ENCODE measurements at regions of chr15 and their contacts with region 1.

Region 1: DNA sequence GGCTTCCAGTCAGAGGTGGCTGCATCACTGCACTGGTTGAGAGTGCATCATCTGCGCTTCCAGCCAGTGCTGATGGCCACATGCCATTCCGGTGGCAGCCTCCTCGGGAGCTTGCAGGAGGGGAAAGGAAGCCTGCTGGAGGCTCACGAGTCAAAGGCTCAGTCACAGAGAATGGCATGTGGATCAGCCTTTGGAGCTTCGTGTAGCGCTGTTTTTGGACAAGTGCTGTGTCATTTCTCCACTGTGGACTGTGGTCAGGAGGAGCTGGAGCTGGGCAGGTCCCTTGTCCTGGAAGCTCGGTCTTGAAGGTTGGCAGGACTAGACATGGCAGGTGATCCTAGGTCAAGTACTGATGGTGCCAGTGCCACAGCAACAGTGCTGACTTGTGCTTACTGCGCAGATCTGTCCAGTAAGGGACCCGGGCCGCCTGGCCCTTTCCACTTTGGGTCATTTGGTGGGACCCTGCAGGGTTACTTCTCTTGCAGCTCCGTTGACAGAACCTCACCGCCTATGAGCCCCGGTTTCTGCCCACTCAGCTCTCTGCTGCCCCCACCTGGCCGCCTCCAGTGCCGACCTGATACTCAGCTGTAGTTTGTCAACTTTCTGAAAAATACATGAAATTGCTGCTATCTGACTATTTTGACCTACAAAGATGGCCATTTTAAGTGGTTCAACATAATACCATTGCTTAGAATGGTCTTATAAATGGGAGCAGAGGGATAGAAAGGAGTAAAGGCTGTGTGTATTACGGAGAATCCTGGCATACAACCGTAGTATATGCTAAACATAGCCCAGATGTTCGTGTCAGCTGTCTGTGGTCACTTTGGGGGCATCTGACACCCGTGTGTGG is 27.6 kb upstream of the TRPM1 start:
- DNase-seq: peak; percentile 86
- H3K4me3 Mint-ChIP-seq: no peak overlapping the region
- H3K27ac Mint-ChIP-seq: no peak overlapping the region
- H3K4me1 Mint-ChIP-seq: peaks cover 3% of the 10 kb centered on the region
- H3K27me3 Mint-ChIP-seq: peaks cover 54% of the 10 kb centered on the region

Region 2: DNA sequence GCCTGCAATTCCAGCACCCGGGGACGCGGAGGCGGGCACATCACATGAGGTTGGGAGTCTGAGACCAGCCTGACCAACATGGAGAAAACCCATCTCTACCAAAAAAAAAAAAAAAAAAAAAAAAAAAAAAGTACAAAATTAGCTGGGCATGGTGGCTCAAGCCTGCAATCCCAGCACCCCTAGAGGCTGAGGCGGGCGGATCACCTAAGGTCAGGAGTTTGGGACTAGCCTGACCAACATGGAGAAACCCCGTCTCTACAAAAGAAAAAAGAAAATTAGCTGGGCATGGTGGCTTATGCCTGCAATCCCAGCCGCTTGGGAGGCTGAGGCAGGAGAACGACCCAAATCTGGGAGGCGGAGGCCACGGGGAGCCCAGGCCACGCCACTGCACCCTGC is 232.9 kb before region 1 on chr15:
- CTCF ChIA-PET with region 1: interaction called, 31 read pairs
- DNase-seq: no peak
- H3K4me3 Mint-ChIP-seq: no peak overlapping the region
- H3K27ac Mint-ChIP-seq: no peak overlapping the region
- H3K4me1 Mint-ChIP-seq: peaks cover 4% of the 10 kb centered on the region
- H3K27me3 Mint-ChIP-seq: peaks cover 20% of the 10 kb centered on the region

Region 3: GRCh38 chr15:30969696-30970095 is 159.4 kb before region 1 on chr15:
- CTCF ChIA-PET with region 1: interaction called, 13 read pairs
- DNase-seq: no peak
- H3K4me3 Mint-ChIP-seq: no peak overlapping the region
- H3K27ac Mint-ChIP-seq: no peak overlapping the region
- H3K4me1 Mint-ChIP-seq: peaks cover 22% of the 10 kb centered on the region
- H3K27me3 Mint-ChIP-seq: no peaks in the 10 kb centered on the region

Region 4: GRCh38 chr15:31034159-31034558 is 95.0 kb before region 1 on chr15:
- CTCF ChIA-PET with region 1: no interaction called
- DNase-seq: no peak
- H3K4me3 Mint-ChIP-seq: no peak overlapping the region
- H3K27ac Mint-ChIP-seq: no peak overlapping the region
- H3K4me1 Mint-ChIP-seq: peaks cover 5% of the 10 kb centered on the region
- H3K27me3 Mint-ChIP-seq: peaks cover 21% of the 10 kb centered on the region

Region 5: GRCh38 chr15:31111091-31111647 is 18.0 kb before region 1 on chr15:
- CTCF ChIA-PET with region 1: interaction called, 13 read pairs
- DNase-seq: no peak
- H3K4me3 Mint-ChIP-seq: no peak overlapping the region
- H3K27ac Mint-ChIP-seq: no peak overlapping the region
- H3K4me1 Mint-ChIP-seq: no peaks in the 10 kb centered on the region
- H3K27me3 Mint-ChIP-seq: peaks cover 48% of the 10 kb centered on the region

Region 6: DNA sequence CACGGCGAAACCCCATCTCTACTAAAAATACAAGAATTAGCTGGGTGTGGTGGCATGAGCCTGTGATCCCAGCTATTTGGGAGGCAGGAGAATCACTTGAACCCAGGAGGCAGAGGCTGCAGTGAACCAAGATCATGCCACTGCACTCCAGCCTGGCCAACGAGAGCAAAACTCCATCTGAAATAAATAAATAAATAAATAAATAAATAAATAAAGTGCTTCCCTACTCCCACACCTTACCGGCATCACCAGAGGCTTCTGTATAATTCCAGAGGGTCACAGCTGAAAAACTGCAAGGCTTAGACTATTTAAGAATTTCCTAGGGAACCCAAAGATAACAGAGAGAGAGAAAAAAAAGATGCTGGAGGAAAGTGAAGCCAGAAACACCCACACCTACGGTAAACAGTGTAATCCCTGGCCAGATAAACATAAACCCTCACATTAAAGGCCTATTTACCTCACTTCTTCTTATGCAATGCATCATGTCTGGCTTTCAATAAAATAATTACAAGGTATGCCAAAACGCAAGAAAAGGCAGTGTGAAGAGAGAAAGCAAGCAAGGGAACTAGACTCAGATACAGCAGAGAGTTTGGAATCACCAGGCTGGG is 12.6 kb before region 1 on chr15:
- CTCF ChIA-PET with region 1: interaction called, 13 read pairs
- DNase-seq: no peak
- H3K4me3 Mint-ChIP-seq: no peak overlapping the region
- H3K27ac Mint-ChIP-seq: no peak overlapping the region
- H3K4me1 Mint-ChIP-seq: no peaks in the 10 kb centered on the region
- H3K27me3 Mint-ChIP-seq: peaks cover 42% of the 10 kb centered on the region